Activated CD4-positive, alpha-beta T cell treated with anti-CD3 and anti-CD28 coated beads for 36 hours (primary cell): ENCODE measurements at regions of chr6 and their contacts with region 1.

Region 1: GRCh38 chr6:46419576-46420002 is 71.7 kb downstream of the RCAN2 start:
- DNase-seq: peak; percentile 55
- ATAC-seq: no peak
- H3K4me3 Mint-ChIP-seq: no peak overlapping the region
- H3K27ac Mint-ChIP-seq: no peak overlapping the region
- H3K4me1 Mint-ChIP-seq: no peaks in the 10 kb centered on the region
- H3K27me3 Mint-ChIP-seq: peaks cover 21% of the 10 kb centered on the region

Region 2: DNA sequence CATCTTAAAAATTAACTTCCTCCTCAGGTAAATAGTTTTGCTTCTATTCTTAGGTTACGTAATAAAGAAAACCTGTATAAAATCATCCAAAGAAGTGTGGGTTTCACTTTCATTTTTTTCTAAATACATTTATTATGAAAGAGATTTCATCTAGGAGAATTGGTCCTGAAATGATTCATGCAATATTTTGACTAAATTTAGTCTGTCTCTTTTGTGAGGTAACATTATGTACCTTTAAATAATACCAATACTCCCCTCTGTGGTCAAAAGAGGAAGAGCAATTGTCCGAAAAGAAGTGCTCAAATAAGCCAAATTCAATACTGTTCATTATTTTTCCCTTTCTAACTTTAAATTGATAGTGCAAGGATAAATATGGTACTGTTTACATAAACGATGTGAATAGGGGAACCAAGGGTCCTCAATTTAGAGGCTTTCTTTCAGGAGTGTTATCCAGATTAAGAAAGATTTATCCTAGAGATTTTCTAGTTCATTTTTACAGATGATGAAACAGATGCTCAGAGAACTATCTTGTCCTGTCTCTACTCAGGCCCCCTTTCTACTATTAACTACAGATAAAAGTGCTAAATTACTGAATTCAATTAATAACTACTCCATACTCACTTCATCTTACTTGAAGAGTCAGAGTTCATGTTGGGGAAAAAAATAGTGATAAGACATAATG is 206.8 kb after region 1 on chr6:
- CTCF ChIA-PET with region 1: no interaction called
- POLR2A ChIA-PET with region 1: no interaction called
- intact Hi-C with region 1: loop called (anchors 1 kb)
- DNase-seq: no peak
- ATAC-seq: peak; percentile 75
- H3K4me3 Mint-ChIP-seq: no peak overlapping the region
- H3K27ac Mint-ChIP-seq: no peak overlapping the region
- H3K4me1 Mint-ChIP-seq: peaks cover 4% of the 10 kb centered on the region
- H3K27me3 Mint-ChIP-seq: peaks cover 21% of the 10 kb centered on the region

Region 3: GRCh38 chr6:46642928-46643751 is 223.6 kb after region 1 on chr6:
- CTCF ChIA-PET with region 1: no interaction called
- POLR2A ChIA-PET with region 1: no interaction called
- intact Hi-C with region 1: loop called in 1 of 2 experiments (anchors 5 kb)
- DNase-seq: peak; percentile 12
- ATAC-seq: peak; percentile 99
- H3K4me3 Mint-ChIP-seq: no peak overlapping the region
- H3K27ac Mint-ChIP-seq: no peak overlapping the region
- H3K4me1 Mint-ChIP-seq: peaks cover 15% of the 10 kb centered on the region
- H3K27me3 Mint-ChIP-seq: peaks cover 25% of the 10 kb centered on the region

Region 4: GRCh38 chr6:46781478-46782378 is 362.1 kb after region 1 on chr6:
- CTCF ChIA-PET with region 1: interaction called, 3 read pairs
- POLR2A ChIA-PET with region 1: no interaction called
- intact Hi-C with region 1: loop called (anchors 1 kb)
- DNase-seq: peak; percentile 61
- ATAC-seq: peak; percentile 19
- H3K4me3 Mint-ChIP-seq: no peak overlapping the region
- H3K27ac Mint-ChIP-seq: no peak overlapping the region
- H3K4me1 Mint-ChIP-seq: no peaks in the 10 kb centered on the region
- H3K27me3 Mint-ChIP-seq: peaks cover 6% of the 10 kb centered on the region

Region 5: GRCh38 chr6:46862381-46862780 is 442.8 kb after region 1 on chr6:
- CTCF ChIA-PET with region 1: no interaction called
- POLR2A ChIA-PET with region 1: no interaction called
- intact Hi-C with region 1: loop called in 1 of 2 experiments (anchors 10 kb)
- DNase-seq: peak; percentile 22
- ATAC-seq: no peak
- H3K4me3 Mint-ChIP-seq: no peak overlapping the region
- H3K27ac Mint-ChIP-seq: no peak overlapping the region
- H3K4me1 Mint-ChIP-seq: no peaks in the 10 kb centered on the region
- H3K27me3 Mint-ChIP-seq: peaks cover 13% of the 10 kb centered on the region

Region 6: DNA sequence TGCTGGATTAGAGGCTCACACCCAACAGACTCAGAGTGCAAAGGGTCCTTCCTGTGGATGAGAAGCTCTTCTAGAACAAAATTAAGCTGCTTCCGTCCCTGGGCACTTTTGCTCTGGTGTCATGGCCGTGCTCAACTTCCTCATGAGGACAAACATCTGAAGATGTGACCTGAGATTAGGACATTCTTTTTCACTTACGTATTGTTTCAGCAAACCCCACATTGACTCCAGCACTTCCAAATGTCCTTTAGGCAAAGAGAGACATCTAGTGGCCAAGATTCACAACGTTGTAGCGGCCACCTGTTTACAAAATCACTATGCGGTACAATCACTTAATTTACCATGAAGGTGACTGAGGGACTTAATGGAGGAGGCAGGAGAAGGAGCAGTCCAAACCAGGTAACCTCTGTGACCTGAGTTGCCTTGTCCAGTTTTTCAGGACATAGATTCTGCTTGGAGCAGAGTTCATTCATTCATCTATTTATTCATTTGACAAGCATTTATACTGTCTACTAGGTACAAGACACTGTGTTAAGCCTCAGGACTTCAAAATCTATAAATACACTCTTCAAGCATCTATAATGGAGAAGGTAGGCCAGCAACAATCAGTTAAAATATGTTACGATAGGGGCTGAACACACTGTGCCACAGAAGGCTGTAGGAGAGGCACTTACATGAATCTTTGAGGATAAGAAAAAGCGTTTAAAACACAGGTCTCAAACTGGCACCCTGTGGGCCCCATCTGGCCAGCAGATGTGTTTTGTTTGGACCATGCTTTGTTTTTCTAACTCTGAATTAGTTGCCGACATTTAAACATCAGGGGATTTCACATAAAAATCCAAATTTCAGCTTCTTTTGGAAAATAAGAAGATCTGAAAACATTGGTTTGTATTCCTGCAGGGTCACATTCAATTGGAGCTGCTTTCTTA is 628.2 kb after region 1 on chr6:
- CTCF ChIA-PET with region 1: interaction called, 4 read pairs
- POLR2A ChIA-PET with region 1: no interaction called
- intact Hi-C with region 1: loop called in 1 of 2 experiments (anchors 1 kb)
- DNase-seq: peak; percentile 42
- ATAC-seq: peak; percentile 72
- H3K4me3 Mint-ChIP-seq: no peak overlapping the region
- H3K27ac Mint-ChIP-seq: no peak overlapping the region
- H3K4me1 Mint-ChIP-seq: peaks cover 2% of the 10 kb centered on the region
- H3K27me3 Mint-ChIP-seq: peaks cover 10% of the 10 kb centered on the region